ENCODE measurements at regions of chr11 and their contacts with region 1.

Region 1: GRCh38 chr11:22742157-22742613 is 75.8 kb downstream of the GAS2 start:
- DNase-seq: peak; percentile 11
- H3K4me3 Mint-ChIP-seq: no peak overlapping the region
- H3K27ac Mint-ChIP-seq: peak overlapping the region; percentile 39
- H3K4me1 Mint-ChIP-seq: peaks cover 6% of the 10 kb centered on the region
- H3K27me3 Mint-ChIP-seq: peaks cover 18% of the 10 kb centered on the region

Region 2: DNA sequence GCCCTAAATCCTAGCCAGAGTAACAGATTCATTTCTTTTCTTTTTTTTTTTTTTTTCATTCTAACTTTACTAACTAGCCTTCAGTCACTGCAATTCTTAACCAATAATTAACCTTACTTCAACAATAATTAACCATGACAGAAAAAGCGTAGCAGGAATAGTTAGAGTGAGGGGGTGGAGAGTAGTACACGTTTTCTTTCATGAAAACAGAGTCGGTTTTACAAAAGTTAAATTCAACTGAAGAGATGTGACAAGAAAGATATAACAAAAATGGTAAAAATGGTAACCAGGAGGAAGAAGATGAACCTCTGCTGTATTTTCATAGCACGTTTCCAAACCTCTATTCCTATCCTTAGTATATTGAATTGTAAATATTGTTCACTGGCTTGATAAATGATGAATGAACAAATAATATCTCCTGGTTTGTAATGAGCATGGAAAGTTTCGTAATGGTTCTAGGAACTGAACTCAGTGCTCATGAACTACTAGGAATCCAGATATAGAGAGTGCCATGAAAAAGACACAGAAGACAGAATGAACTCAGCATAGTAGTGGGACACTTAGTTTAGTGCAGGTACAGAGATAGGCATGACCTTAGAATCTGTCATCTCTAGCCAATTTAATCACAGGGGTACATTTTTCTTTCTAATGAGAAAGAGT is 665.8 kb before region 1 on chr11:
- CTCF ChIA-PET with region 1: no interaction called
- intact Hi-C with region 1: no loop called
- DNase-seq: no peak
- H3K4me3 Mint-ChIP-seq: no peak overlapping the region
- H3K27ac Mint-ChIP-seq: no peak overlapping the region
- H3K4me1 Mint-ChIP-seq: no peaks in the 10 kb centered on the region
- H3K27me3 Mint-ChIP-seq: no peaks in the 10 kb centered on the region

Region 3: GRCh38 chr11:22752908-22753310 is 10.7 kb after region 1 on chr11:
- CTCF ChIA-PET with region 1: no interaction called
- intact Hi-C with region 1: loop called (anchors 1 kb)
- DNase-seq: no peak
- H3K4me3 Mint-ChIP-seq: no peak overlapping the region
- H3K27ac Mint-ChIP-seq: no peak overlapping the region
- H3K4me1 Mint-ChIP-seq: peaks cover 8% of the 10 kb centered on the region
- H3K27me3 Mint-ChIP-seq: no peaks in the 10 kb centered on the region

Measured in activated naive CD4-positive, alpha-beta T cell treated with anti-CD3 and anti-CD28 coated beads for 36 hours (primary cell).